ENCODE measurements at regions of chr2 and their contacts with region 1.

Region 1: GRCh38 chr2:152036611-152037469 is 62.0 kb downstream of the CACNB4 start:
- DNase-seq: peak; percentile 79 to 88 (median 82)
- H3K4me3 ChIP-seq: no peak overlapping the region
- H3K27ac ChIP-seq: no peak overlapping the region
- H3K4me1 ChIP-seq: peaks cover 0 to 26% (median 7%) of the 10 kb centered on the region in 4 experiments
- H3K27me3 ChIP-seq: no peaks in the 10 kb centered on the region

Region 2: DNA sequence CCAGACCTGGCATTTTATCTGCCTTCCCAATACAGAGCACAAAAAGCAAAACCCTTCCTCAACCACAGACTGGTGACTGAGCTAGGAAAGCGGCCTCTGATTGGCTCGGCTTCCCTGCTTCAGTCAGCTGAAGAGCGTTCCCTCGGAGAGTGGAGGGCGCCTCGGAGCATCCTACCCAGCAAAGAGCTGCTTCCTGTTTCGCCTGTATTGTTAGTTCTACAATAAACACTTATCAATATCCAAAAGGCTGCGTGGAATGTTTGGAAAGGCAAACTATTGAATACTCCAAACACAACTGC is 63.0 kb before region 1 on chr2:
- CTCF ChIA-PET with region 1: no interaction called
- POLR2A ChIA-PET with region 1: no interaction called
- DNase-seq: peak in 2 of 3 donors; percentile 32 to 45
- H3K4me3 ChIP-seq: no peak overlapping the region
- H3K27ac ChIP-seq: no peak overlapping the region
- H3K4me1 ChIP-seq: peaks cover 0 to 4% (median 0%) of the 10 kb centered on the region in 4 experiments
- H3K27me3 ChIP-seq: no peaks in the 10 kb centered on the region

Region 3: DNA sequence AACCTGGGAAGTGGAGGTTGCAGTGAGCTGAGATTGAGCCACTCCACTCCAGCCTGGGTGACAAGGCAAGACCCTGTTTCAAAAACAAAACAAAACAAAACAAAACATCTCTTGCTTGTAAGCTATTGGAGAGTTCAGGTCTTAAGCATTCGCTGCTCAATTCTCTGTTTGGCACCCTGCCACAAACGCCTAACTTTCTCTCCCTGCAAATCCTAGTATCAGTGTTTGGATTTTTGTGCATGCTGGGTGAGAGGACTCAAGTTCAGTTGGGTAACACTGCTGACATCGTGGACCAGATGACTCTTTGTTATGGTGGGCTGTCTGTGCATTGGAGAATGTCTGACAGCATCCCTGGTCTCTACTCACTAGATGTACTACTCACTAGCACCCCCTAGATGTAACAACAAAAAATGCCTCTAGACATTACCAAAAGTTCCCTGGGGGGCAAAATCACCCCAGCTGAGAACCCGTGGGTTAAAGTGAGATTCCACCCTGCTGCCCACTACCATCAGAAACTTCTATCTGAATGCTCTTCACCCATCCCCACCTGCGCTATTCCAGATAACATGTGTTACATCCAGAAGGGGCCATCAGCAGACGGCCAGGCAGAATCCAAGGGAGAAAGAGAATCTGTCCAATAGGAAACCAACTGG is 11.1 kb after region 1 on chr2:
- CTCF ChIA-PET with region 1: interaction called, 29 read pairs
- POLR2A ChIA-PET with region 1: no interaction called
- DNase-seq: peak in 2 of 3 donors; percentile 32 to 35
- H3K4me3 ChIP-seq: no peak overlapping the region
- H3K27ac ChIP-seq: no peak overlapping the region
- H3K4me1 ChIP-seq: peaks cover 18 to 72% (median 39%) of the 10 kb centered on the region in 4 experiments
- H3K27me3 ChIP-seq: no peaks in the 10 kb centered on the region

Measured in common myeloid progenitor, CD34-positive (primary cell).